ENCODE measurements at regions of chr15 and their contacts with region 1.

Region 1: DNA sequence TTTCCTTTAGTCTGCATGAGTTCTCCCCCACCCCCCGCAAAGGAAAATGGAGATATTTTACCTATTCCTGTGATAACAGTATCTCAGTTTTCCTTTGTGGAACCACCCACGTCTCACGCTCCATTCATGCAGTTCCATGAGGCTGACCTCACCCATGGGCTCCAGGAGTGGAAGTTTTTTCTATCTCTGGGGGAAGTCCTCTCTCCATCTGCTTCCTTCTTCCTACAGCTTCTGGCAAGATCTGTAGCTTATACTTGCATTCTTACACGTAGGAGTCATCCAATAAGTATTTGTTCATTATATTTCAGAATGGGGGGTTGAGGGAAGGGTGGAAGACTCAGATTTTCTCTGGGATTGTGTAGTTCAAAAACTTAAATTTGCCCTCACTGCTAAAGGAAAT is 5.8 kb upstream of the GLCE start:
- DNase-seq: peak; percentile 96
- H3K4me3 ChIP-seq: no peak overlapping the region
- H3K27ac ChIP-seq: peak overlapping the region; percentile 82
- H3K4me1 ChIP-seq: peaks cover 28% of the 10 kb centered on the region
- H3K27me3 ChIP-seq: no peaks in the 10 kb centered on the region
- CTCF ChIP-seq: no peak
- POLR2A ChIP-seq: peak; percentile 64

Region 2: GRCh38 chr15:69074001-69074842 is 80.5 kb before region 1 on chr15:
- CTCF ChIA-PET with region 1: interaction called, 3 read pairs
- POLR2A ChIA-PET with region 1: interaction called, 4 read pairs
- dilution Hi-C with region 1: no loop called
- intact Hi-C with region 1: loop called (anchors 1 kb)
- DNase-seq: peak; percentile 70
- H3K4me3 ChIP-seq: peak overlapping the region; percentile 47 to 58 (median 56)
- H3K27ac ChIP-seq: peak overlapping the region; percentile 34
- H3K4me1 ChIP-seq: peaks cover 6% of the 10 kb centered on the region
- H3K27me3 ChIP-seq: no peaks in the 10 kb centered on the region
- CTCF ChIP-seq: peak in 1 of 2 donors; percentile 28
- POLR2A ChIP-seq: peak; percentile 77

Region 3: GRCh38 chr15:69081310-69082004 is 73.2 kb before region 1 on chr15:
- CTCF ChIA-PET with region 1: interaction called, 12 read pairs
- POLR2A ChIA-PET with region 1: interaction called, 11 read pairs
- dilution Hi-C with region 1: no loop called
- intact Hi-C with region 1: loop called (anchors 1 kb)
- DNase-seq: peak; percentile 80
- H3K4me3 ChIP-seq: peak overlapping the region in 1 of 3 experiments; percentile 14
- H3K27ac ChIP-seq: peak overlapping the region; percentile 95
- H3K4me1 ChIP-seq: peaks cover 34% of the 10 kb centered on the region
- H3K27me3 ChIP-seq: no peaks in the 10 kb centered on the region
- CTCF ChIP-seq: no peak
- POLR2A ChIP-seq: peak; percentile 37

Region 4: DNA sequence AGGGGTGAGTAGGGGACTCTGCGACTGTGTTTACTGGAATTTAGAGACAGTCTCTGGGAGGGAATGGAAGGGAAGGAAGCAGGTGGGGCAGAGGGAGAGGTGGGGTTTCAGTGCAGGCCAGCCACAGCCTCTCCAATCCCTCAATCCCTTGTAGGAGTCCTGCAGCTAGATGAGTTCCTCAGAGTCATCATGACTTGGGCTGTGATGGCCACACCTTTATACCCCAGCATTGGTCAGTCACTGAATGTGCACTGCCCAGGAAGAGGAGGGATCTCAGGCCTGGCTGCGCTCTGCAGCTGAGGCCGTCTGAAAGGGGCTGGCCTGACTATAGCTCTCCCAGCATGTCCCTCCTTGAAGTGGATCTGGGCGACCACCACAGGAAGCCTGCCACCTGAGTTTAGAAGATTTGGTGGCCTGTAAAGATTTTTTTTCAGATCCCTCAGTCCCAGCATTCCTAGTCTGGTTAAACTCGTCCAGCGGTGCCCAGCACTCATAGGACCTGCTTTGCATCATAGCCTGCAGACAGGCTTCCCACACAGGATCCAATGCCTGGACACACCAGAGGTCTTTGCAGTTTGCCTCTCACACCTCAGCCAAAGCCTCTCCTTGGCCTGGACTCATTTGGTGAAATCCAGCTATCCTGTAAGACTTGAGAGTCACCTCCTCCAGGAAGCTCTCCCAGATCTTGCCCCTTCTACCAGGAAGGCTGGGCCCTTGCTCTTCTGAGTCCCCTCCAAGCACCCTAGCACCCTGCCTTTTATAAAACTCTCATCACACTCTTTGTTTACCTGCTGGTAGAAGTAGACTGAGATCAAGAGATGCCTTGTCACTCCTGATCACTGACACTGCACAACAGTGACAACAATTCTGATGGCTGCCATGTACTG is 61.3 kb before region 1 on chr15:
- CTCF ChIA-PET with region 1: interaction called, 5 read pairs
- POLR2A ChIA-PET with region 1: interaction called, 3 read pairs
- dilution Hi-C with region 1: no loop called
- intact Hi-C with region 1: loop called (anchors 1 kb)
- DNase-seq: peak; percentile 57
- H3K4me3 ChIP-seq: no peak overlapping the region
- H3K27ac ChIP-seq: no peak overlapping the region
- H3K4me1 ChIP-seq: peaks cover 29% of the 10 kb centered on the region
- H3K27me3 ChIP-seq: no peaks in the 10 kb centered on the region
- CTCF ChIP-seq: no peak
- POLR2A ChIP-seq: no peak

Region 5: GRCh38 chr15:69141286-69141701 is 13.4 kb before region 1 on chr15:
- CTCF ChIA-PET with region 1: interaction called, 7 read pairs
- POLR2A ChIA-PET with region 1: interaction called, 3 read pairs
- dilution Hi-C with region 1: no loop called
- intact Hi-C with region 1: loop called (anchors 1 kb)
- DNase-seq: peak; percentile 56
- H3K4me3 ChIP-seq: no peak overlapping the region
- H3K27ac ChIP-seq: no peak overlapping the region
- H3K4me1 ChIP-seq: peaks cover 5% of the 10 kb centered on the region
- H3K27me3 ChIP-seq: peaks cover 0 to 3% of the 10 kb centered on the region in 2 experiments
- CTCF ChIP-seq: peak in 1 of 2 donors; percentile 34
- POLR2A ChIP-seq: no peak

Region 6: DNA sequence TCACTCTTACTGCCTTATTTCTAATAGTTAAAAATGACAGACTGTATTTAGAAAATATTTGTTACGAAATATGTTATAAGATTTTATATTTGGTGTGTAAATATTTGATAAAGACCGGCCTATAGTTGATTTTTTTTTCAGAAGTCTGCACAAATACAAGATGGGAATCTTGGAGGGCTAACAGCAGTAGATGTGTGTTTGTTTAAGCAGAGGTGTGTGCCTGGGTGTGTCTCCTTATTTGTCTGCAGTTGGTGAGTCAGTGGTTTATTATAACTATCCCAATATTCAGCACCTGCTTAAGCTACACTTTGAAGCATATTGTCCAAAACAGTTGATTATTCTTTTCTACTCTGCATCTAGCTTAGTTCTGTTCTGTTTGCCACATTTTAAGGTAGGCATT is 18.1 kb after region 1 on chr15:
- CTCF ChIA-PET with region 1: no interaction called
- POLR2A ChIA-PET with region 1: no interaction called
- dilution Hi-C with region 1: no loop called
- intact Hi-C with region 1: no loop called
- DNase-seq: no peak
- H3K4me3 ChIP-seq: no peak overlapping the region
- H3K27ac ChIP-seq: no peak overlapping the region
- H3K4me1 ChIP-seq: peaks cover 12% of the 10 kb centered on the region
- H3K27me3 ChIP-seq: no peaks in the 10 kb centered on the region
- CTCF ChIP-seq: no peak
- POLR2A ChIP-seq: no peak

Region 7: GRCh38 chr15:69225355-69226025 is 70.8 kb after region 1 on chr15:
- CTCF ChIA-PET with region 1: interaction called, 29 read pairs
- POLR2A ChIA-PET with region 1: no interaction called
- dilution Hi-C with region 1: no loop called
- intact Hi-C with region 1: no loop called
- DNase-seq: peak; percentile 62
- H3K4me3 ChIP-seq: no peak overlapping the region
- H3K27ac ChIP-seq: no peak overlapping the region
- H3K4me1 ChIP-seq: peaks cover 2% of the 10 kb centered on the region
- H3K27me3 ChIP-seq: no peaks in the 10 kb centered on the region
- CTCF ChIP-seq: peak; percentile 5 to 18
- POLR2A ChIP-seq: no peak

Measured in endothelial cell of umbilical vein (primary cell).